CD4-positive, alpha-beta T cell (primary cell): ENCODE measurements at regions of chr12 and their contacts with region 1.

Region 1: DNA sequence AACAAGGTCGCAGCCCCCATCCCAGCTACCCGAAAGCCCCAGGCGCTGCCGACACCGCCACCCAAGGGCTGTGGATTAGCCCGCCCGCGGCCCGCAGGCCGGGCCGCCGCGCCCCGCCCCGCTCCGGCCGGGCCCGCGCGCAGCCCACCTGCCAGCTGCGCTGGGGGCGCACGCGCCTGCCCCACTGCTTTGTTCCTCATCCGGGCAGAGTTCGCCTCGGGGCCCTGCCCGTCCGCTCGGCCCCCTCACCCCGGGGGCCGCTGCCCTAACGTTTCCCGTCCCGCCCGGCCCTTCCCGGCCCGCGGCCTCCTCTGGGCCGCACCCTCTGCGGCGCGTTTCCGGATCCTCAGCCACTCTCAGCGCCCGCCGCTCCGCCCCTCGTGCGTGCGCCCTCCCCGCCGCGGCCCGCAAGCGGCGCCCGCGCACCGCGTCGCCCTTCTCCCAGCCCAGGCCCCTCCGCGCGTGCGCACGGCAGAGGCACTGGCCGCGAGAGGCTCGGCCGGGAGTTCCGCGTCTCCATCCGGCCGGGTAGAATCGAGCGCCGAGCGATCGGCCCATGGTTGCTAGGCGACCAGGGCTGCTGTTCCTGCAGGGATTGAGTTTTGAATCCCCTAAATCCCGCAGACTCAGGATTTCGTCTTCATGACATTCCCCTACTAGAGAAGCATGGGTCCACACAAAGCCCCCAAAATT is at the start of gene PRDM4:
- DNase-seq: peak; percentile 75 to 98 (median 88)
- ATAC-seq: peak; percentile 91
- H3K4me3 ChIP-seq: peak within 1 kb of the TSS; percentile 78
- H3K4me3 Mint-ChIP-seq: peak within 1 kb of the TSS; percentile 96
- H3K27ac ChIP-seq: peak within 1 kb of the TSS; percentile 51 to 77
- H3K27ac Mint-ChIP-seq: peak within 1 kb of the TSS; percentile 87
- H3K4me1 ChIP-seq: peaks cover 26% of the 10 kb centered on the region
- H3K4me1 Mint-ChIP-seq: peaks cover 48% of the 10 kb centered on the region
- H3K27me3 ChIP-seq: no peaks in the 10 kb centered on the region
- H3K27me3 Mint-ChIP-seq: no peaks in the 10 kb centered on the region
- CTCF ChIP-seq: no peak
- total RNA-seq, gene PRDM4: 40.2 to 44.0 TPM

Region 2: GRCh38 chr12:106955377-106956047 is 805.4 kb before region 1 on chr12 and contains the start of gene TMEM263:
- CTCF ChIA-PET with region 1: no interaction called
- POLR2A ChIA-PET with region 1: no interaction called
- intact Hi-C with region 1: loop called in 1 of 2 experiments (anchors 10 kb)
- DNase-seq: peak; percentile 74 to 97 (median 88)
- ATAC-seq: peak; percentile 73
- H3K4me3 ChIP-seq: peak within 1 kb of the TSS; percentile 77
- H3K4me3 Mint-ChIP-seq: peak within 1 kb of the TSS; percentile 98
- H3K27ac ChIP-seq: peak within 1 kb of the TSS; percentile 81 to 89
- H3K27ac Mint-ChIP-seq: peak within 1 kb of the TSS; percentile 98
- H3K4me1 ChIP-seq: peaks cover 13% of the 10 kb centered on the region
- H3K4me1 Mint-ChIP-seq: peaks cover 43% of the 10 kb centered on the region
- H3K27me3 ChIP-seq: no peaks in the 10 kb centered on the region
- H3K27me3 Mint-ChIP-seq: no peaks in the 10 kb centered on the region
- CTCF ChIP-seq: no peak
- total RNA-seq, gene TMEM263: 33.2 to 33.4 TPM

Region 3: GRCh38 chr12:107099917-107100316 is 661.0 kb before region 1 on chr12:
- CTCF ChIA-PET with region 1: no interaction called
- POLR2A ChIA-PET with region 1: no interaction called
- intact Hi-C with region 1: loop called in 1 of 2 experiments (anchors 5 kb)
- DNase-seq: no peak
- ATAC-seq: no peak
- H3K4me3 ChIP-seq: no peak overlapping the region
- H3K4me3 Mint-ChIP-seq: no peak overlapping the region
- H3K27ac ChIP-seq: no peak overlapping the region
- H3K27ac Mint-ChIP-seq: no peak overlapping the region
- H3K4me1 ChIP-seq: peaks cover 3% of the 10 kb centered on the region
- H3K4me1 Mint-ChIP-seq: no peaks in the 10 kb centered on the region
- H3K27me3 ChIP-seq: no peaks in the 10 kb centered on the region
- H3K27me3 Mint-ChIP-seq: peaks cover 16% of the 10 kb centered on the region
- CTCF ChIP-seq: no peak

Region 4: GRCh38 chr12:108193917-108194316 is 433.0 kb after region 1 on chr12:
- CTCF ChIA-PET with region 1: no interaction called
- POLR2A ChIA-PET with region 1: no interaction called
- intact Hi-C with region 1: loop called in 1 of 2 experiments (anchors 5 kb)
- DNase-seq: peak in 4 of 14 experiments; percentile 13 to 49 (median 33)
- ATAC-seq: no peak
- H3K4me3 ChIP-seq: no peak overlapping the region
- H3K4me3 Mint-ChIP-seq: no peak overlapping the region
- H3K27ac ChIP-seq: no peak overlapping the region
- H3K27ac Mint-ChIP-seq: no peak overlapping the region
- H3K4me1 ChIP-seq: no peaks in the 10 kb centered on the region
- H3K4me1 Mint-ChIP-seq: no peaks in the 10 kb centered on the region
- H3K27me3 ChIP-seq: no peaks in the 10 kb centered on the region
- H3K27me3 Mint-ChIP-seq: peaks cover 35% of the 10 kb centered on the region
- CTCF ChIP-seq: peak; percentile 57

Region 5: DNA sequence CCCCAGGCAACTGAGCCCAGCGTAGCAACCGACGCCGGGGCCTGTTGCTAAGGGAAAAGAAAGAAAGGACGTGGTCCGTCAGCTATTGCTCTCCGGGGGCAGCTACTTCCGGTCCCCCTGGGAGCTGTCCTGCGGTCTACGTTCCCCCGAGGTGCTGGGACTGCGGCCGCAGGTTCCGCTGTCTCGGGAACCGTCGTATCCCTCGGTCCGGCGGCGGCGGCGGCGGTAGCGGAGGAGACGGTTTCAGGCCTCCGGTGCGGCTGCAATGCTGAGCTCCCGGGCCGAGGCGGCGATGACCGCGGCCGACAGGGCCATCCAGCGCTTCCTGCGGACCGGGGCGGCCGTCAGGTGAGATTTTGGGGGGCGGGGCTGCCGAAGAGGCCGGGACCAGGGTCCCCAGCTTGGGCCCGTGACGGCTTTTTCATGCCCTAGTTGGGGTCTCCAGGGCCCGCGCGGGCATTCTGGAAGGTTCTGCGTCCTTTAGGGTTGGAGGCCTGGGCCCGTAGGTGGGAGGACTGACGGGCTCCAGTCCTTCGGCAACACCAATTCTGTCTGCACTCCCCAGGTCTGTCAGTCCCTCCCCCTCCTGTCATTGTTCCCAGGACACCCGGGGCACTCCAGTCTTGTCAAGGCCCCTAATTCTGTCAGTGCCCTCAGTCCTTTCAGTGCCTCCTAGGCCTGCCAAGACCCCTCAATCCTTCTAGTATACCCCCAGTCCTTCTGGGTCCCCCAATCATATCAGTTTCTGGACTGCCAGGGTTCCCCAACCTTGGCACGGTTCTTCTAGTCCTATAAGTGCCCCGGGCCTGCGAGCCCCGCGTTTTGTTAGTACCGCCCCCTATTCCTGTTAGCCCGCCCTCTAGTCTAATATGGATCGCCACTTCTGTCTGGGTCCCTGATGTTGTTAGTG is 1291.7 kb after region 1 on chr12 and contains the start of gene USP30:
- CTCF ChIA-PET with region 1: no interaction called
- POLR2A ChIA-PET with region 1: no interaction called
- intact Hi-C with region 1: loop called in 1 of 2 experiments (anchors 10 kb)
- DNase-seq: peak; percentile 75 to 93 (median 81)
- ATAC-seq: peak; percentile 77
- H3K4me3 ChIP-seq: peak within 1 kb of the TSS; percentile 92
- H3K4me3 Mint-ChIP-seq: peak within 1 kb of the TSS; percentile 98
- H3K27ac ChIP-seq: peak within 1 kb of the TSS; percentile 87
- H3K27ac Mint-ChIP-seq: peak within 1 kb of the TSS; percentile 86
- H3K4me1 ChIP-seq: peaks cover 23% of the 10 kb centered on the region
- H3K4me1 Mint-ChIP-seq: peaks cover 13% of the 10 kb centered on the region
- H3K27me3 ChIP-seq: no peaks in the 10 kb centered on the region
- H3K27me3 Mint-ChIP-seq: no peaks in the 10 kb centered on the region
- CTCF ChIP-seq: no peak
- total RNA-seq, gene USP30: 21.8 to 23.0 TPM